ENCODE measurements at regions of chr3 and their contacts with region 1.

Region 1: GRCh38 chr3:9422712-9423424 is 25.5 kb downstream of the SETD5 start:
- DNase-seq: peak in 4 of 5 donors; percentile 83 to 91 (median 88)
- ATAC-seq: peak; percentile 91 to 98 (median 96)
- H3K4me3 ChIP-seq: peak overlapping the region in 3 of 12 donors; percentile 6 to 31 (median 11)
- H3K27ac ChIP-seq: peak overlapping the region; percentile 14 to 86 (median 78)
- H3K4me1 ChIP-seq: peaks cover 12 to 76% (median 47%) of the 10 kb centered on the region in 12 donors
- H3K27me3 ChIP-seq: no peaks in the 10 kb centered on the region
- CTCF ChIP-seq: peak; percentile 17 to 66 (median 49)
- POLR2A ChIP-seq: no peak

Region 2: GRCh38 chr3:9352917-9353752 is 69.7 kb before region 1 on chr3:
- intact Hi-C with region 1: loop called in 5 of 10 experiments (anchors 5 to 10 kb)
- DNase-seq: peak in 4 of 5 donors; percentile 56 to 68 (median 64)
- ATAC-seq: peak; percentile 45 to 88 (median 81)
- H3K4me3 ChIP-seq: no peak overlapping the region
- H3K27ac ChIP-seq: no peak overlapping the region
- H3K4me1 ChIP-seq: peaks cover 0 to 8% (median 0%) of the 10 kb centered on the region in 12 donors
- H3K27me3 ChIP-seq: no peaks in the 10 kb centered on the region
- CTCF ChIP-seq: peak; percentile 76 to 93 (median 88)
- POLR2A ChIP-seq: no peak

Region 3: GRCh38 chr3:9373465-9373864 is 49.4 kb before region 1 on chr3:
- intact Hi-C with region 1: no loop called
- DNase-seq: no peak
- ATAC-seq: no peak
- H3K4me3 ChIP-seq: no peak overlapping the region
- H3K27ac ChIP-seq: no peak overlapping the region
- H3K4me1 ChIP-seq: peaks cover 0 to 5% (median 0%) of the 10 kb centered on the region in 12 donors
- H3K27me3 ChIP-seq: no peaks in the 10 kb centered on the region
- CTCF ChIP-seq: no peak
- POLR2A ChIP-seq: no peak

Region 4: GRCh38 chr3:9396700-9397521 is 26.0 kb before region 1 on chr3:
- intact Hi-C with region 1: loop called in 9 of 10 experiments (anchors 1 to 5 kb)
- DNase-seq: peak; percentile 99
- ATAC-seq: peak; percentile 85 to 91 (median 90)
- H3K4me3 ChIP-seq: peak overlapping the region; percentile 51 to 98 (median 89)
- H3K27ac ChIP-seq: peak overlapping the region; percentile 95 to 99 (median 99)
- H3K4me1 ChIP-seq: peaks cover 18 to 74% (median 65%) of the 10 kb centered on the region in 12 donors
- H3K27me3 ChIP-seq: no peaks in the 10 kb centered on the region
- CTCF ChIP-seq: no peak
- POLR2A ChIP-seq: peak; percentile 18 to 84

Region 5: DNA sequence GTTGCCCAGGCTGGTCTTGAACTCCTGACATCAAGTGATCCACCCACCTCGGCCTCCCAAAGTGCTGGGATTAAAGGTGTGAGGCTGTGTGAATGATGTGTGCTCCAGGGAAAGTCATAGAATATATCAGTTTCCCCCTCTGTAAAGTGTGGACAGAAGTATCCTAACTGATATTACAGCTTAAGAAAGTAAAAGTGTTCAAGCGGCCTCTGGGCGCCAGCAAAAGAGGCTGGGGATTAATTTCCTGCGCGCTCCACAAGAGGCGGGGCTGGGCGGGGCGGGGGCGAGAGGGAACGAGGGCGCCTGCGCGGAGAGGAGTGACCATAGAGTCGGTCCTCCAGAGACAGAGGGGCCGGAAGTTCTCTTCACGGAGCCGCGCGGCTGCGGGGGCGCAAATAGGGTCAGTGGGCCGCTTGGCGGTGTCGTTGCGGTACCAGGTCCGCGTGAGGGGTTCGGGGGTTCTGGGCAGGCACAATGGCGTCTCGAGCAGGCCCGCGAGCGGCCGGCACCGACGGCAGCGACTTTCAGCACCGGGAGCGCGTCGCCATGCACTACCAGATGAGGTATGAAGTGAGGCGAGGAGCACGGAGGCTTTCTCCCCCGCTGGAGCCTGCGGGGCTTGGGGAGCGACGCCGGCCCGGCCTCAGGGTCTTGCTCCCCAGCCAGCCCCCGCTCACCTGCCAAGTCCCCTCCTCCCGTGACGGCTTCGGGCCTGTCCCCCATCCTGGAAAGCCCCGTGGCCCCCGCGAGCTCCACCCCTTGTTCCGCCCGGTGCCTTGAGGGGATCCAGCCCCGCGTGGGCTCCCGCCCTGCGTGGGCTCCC is 467.6 kb after region 1 on chr3 and contains the start of gene JAGN1:
- intact Hi-C with region 1: no loop called
- DNase-seq: peak; percentile 91 to 93 (median 92)
- ATAC-seq: peak; percentile 95 to 99 (median 98)
- H3K4me3 ChIP-seq: peak within 1 kb of the TSS; percentile 61 to 100 (median 94)
- H3K27ac ChIP-seq: peak within 1 kb of the TSS; percentile 87 to 98 (median 96)
- H3K4me1 ChIP-seq: peaks cover 0 to 27% (median 13%) of the 10 kb centered on the region in 12 donors
- H3K27me3 ChIP-seq: no peaks in the 10 kb centered on the region
- CTCF ChIP-seq: peak in 3 of 12 donors; percentile 19 to 24 (median 21)
- POLR2A ChIP-seq: peak in 1 of 2 donors; percentile 88
- total RNA-seq, gene JAGN1: 15.1 to 40.3 (median 21.2) TPM

Measured in heart left ventricle (tissue), 16 donors.